ENCODE measurements at regions of chr22 and their contacts with region 1.

Region 1: GRCh38 chr22:41800348-41801146 is at the start of gene CCDC134:
- H3K4me3 ChIP-seq: peak within 1 kb of the TSS; percentile 75
- H3K27ac ChIP-seq: peak within 1 kb of the TSS; percentile 82
- H3K4me1 ChIP-seq: no peaks in the 10 kb centered on the region; the same call in 1 of the 2 replicates
- CTCF ChIP-seq: peak; percentile 12; the same call in 1 of the 2 replicates

Region 2: GRCh38 chr22:41725510-41726110 is 74.9 kb before region 1 on chr22:
- CTCF ChIA-PET with region 1: no interaction called
- POLR2A ChIA-PET with region 1: interaction called, 11 read pairs
- H3K4me3 ChIP-seq: no peak overlapping the region
- H3K27ac ChIP-seq: no peak overlapping the region
- H3K4me1 ChIP-seq: no peaks in the 10 kb centered on the region
- CTCF ChIP-seq: no peak

Region 3: GRCh38 chr22:41768430-41768829 is 32.1 kb before region 1 on chr22:
- CTCF ChIA-PET with region 1: interaction called, 4 read pairs
- POLR2A ChIA-PET with region 1: interaction called, 10 read pairs
- H3K4me3 ChIP-seq: no peak overlapping the region
- H3K27ac ChIP-seq: no peak overlapping the region
- H3K4me1 ChIP-seq: no peaks in the 10 kb centered on the region
- CTCF ChIP-seq: no peak

Region 4: DNA sequence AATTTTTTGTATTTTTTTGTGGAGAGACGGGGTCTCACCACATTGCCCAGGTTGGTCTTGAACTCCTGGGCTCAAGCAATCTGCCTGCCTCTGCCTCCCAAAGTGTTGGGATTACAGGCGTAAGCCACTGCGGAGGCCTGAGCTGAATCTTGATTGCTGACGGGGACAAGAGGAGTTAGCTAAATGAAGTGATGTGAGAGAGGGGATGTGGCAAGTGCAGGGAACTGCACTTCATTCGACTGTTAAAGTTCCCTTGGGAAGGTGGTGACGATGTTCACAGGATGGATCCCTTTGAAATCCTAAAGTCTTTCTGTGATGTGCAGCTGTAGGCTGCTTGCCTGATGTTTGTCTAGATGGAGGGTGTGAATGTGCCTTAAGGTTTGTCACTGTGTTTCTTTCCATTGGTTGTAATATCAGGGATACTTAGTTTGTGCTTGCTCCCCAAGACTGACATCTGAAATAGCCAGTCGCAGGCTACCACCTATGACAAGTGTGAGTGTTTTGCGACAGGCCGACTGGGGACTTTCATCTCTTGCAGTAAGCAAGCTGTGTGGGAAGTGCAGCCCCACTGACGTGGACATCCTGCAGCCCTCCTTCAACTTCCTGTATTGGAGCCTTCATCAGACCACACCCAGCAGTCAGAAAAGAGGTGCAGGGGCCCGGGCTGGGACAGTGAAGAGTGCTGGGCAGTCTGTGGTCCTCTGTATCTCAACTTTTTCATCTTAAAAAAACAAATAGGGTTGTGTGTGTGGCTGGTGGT is 19.6 kb before region 1 on chr22:
- CTCF ChIA-PET with region 1: interaction called, 3 read pairs
- POLR2A ChIA-PET with region 1: interaction called, 61 read pairs
- H3K4me3 ChIP-seq: no peak overlapping the region
- H3K27ac ChIP-seq: no peak overlapping the region
- H3K4me1 ChIP-seq: no peaks in the 10 kb centered on the region
- CTCF ChIP-seq: no peak

Region 5: GRCh38 chr22:41822317-41823060 is 21.9 kb after region 1 on chr22:
- CTCF ChIA-PET with region 1: interaction called, 4 read pairs
- POLR2A ChIA-PET with region 1: interaction called, 12 read pairs
- H3K4me3 ChIP-seq: no peak overlapping the region
- H3K27ac ChIP-seq: no peak overlapping the region
- H3K4me1 ChIP-seq: no peaks in the 10 kb centered on the region
- CTCF ChIP-seq: peak; percentile 55; the same call in 1 of the 2 replicates

Region 6: GRCh38 chr22:41832553-41833368 is 32.2 kb after region 1 on chr22 and contains the start of gene SREBF2:
- CTCF ChIA-PET with region 1: no interaction called
- POLR2A ChIA-PET with region 1: interaction called, 35 read pairs
- H3K4me3 ChIP-seq: peak within 1 kb of the TSS; percentile 96
- H3K27ac ChIP-seq: peak within 1 kb of the TSS; percentile 87
- H3K4me1 ChIP-seq: peaks cover 3% of the 10 kb centered on the region; the same call in 1 of the 2 replicates
- CTCF ChIP-seq: peak; percentile 69

Region 7: DNA sequence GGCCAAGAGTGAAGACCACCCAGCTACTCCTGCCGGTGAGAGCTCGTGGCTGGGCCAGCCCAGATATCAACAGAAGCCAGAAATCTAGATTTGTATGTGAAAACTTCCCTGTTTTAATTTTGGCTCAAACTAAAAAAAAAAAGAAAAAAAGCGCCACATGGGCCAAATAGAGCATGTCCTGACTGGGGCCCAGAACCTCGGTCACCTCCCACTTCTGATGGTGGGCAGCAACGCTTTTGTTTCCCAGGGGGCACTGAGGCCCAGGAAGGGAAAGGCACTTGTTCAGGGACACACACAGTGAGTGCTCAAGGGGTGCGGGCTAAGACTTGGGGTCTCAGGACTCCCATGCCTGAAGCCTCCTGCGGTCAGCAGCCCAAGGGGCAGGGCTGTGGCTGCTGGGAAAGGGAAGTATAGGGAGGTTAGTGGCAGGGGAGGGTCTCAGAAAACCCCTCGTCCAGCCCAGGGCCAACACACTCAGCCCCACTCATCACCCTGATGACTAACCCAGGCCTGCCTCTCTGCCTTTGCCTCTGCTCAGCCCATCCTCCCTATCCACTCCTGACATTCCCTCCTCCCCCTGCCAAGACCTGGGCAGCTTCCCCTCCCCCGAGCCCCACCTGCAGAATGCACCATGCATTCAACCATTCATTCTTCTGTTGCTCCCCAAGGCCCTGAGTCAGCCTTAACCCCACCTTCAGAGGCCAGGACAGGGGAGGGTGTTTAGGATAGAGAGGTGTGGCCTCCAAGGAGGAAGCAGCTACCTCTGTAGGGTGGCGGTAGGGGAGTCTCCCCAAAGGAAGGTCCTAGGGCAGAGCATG is 499.9 kb after region 1 on chr22:
- CTCF ChIA-PET with region 1: no interaction called
- POLR2A ChIA-PET with region 1: no interaction called
- H3K4me3 ChIP-seq: no peak overlapping the region
- H3K27ac ChIP-seq: no peak overlapping the region
- H3K4me1 ChIP-seq: peaks cover 5% of the 10 kb centered on the region
- CTCF ChIP-seq: no peak